Activated CD8-positive, alpha-beta T cell treated with anti-CD3 and anti-CD28 coated beads, Interleukin-2, amount 10 ng/mL, durations not matched to agents 7 days and 5 days (primary cell): ENCODE measurements at regions of chr11 and their contacts with region 1.

Region 1: GRCh38 chr11:65588199-65589054 is 7.2 kb downstream of the KCNK7 start:
- DNase-seq: peak; percentile 86
- ATAC-seq: peak; percentile 89
- H3K4me3 Mint-ChIP-seq: peak overlapping the region; percentile 55
- H3K27ac Mint-ChIP-seq: peak overlapping the region; percentile 94
- H3K4me1 Mint-ChIP-seq: peaks cover 48% of the 10 kb centered on the region
- H3K27me3 Mint-ChIP-seq: no peaks in the 10 kb centered on the region

Region 2: DNA sequence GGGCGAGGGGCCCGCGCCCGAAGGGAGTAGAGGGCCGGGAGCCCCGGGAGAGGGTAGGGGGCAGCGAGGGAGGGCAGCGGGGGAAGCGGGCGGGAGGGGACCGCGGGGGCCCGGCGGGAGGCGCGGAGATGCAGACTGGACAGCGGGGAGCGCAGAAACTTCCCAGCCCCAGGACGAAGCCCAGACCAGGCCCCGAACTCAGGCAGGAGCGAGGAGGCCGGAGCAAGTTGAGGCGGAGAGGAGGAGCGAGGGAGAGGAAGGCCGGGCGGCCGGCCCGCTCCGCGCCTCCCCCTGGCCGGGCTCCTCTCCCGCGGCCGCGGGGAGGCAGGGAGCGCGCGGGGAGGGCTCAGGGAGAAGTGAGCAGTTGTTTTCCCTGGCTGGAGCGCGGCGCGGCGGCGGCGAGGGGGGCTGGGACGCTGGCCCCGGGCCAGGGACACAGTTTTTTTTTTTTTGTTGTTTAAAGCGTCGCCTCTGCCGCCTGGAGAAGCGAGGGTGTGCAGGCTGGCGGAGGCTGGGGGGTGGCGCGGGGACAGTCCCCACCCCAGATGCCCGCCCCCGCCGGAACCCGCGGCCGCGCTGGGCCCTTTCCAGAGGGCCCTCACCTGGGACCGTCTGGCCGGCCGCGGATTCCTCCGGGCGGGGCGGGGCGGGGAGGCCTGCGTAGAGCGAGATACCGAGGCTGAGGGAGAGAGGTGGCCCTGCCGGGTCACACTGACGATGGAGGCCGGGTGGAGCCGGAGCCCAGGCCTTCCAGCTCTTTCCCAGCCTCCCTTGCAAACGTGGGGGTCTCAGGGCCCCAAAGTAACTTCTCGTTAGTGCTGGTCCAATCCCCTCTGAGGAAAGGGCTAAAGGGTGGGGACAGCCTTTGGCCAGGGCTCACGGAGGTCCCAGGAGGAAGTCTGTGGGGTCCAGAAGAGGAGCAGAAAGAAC is 30.2 kb before region 1 on chr11 and contains the start of gene LTBP3:
- CTCF ChIA-PET with region 1: interaction called, 12 read pairs
- POLR2A ChIA-PET with region 1: interaction called, 3 read pairs
- DNase-seq: no peak
- ATAC-seq: peak; percentile 52
- H3K4me3 Mint-ChIP-seq: peak within 1 kb of the TSS; percentile 82
- H3K27ac Mint-ChIP-seq: peak within 1 kb of the TSS; percentile 78
- H3K4me1 Mint-ChIP-seq: peaks cover 58% of the 10 kb centered on the region
- H3K27me3 Mint-ChIP-seq: no peaks in the 10 kb centered on the region
- total RNA-seq, gene LTBP3: 64.7 to 70.8 TPM

Region 3: GRCh38 chr11:65623852-65624616 is 35.6 kb after region 1 on chr11:
- CTCF ChIA-PET with region 1: no interaction called
- POLR2A ChIA-PET with region 1: no interaction called
- DNase-seq: no peak
- ATAC-seq: no peak
- H3K4me3 Mint-ChIP-seq: no peak overlapping the region
- H3K27ac Mint-ChIP-seq: no peak overlapping the region
- H3K4me1 Mint-ChIP-seq: peaks cover 7% of the 10 kb centered on the region
- H3K27me3 Mint-ChIP-seq: no peaks in the 10 kb centered on the region